ENCODE measurements at regions of chr9 and their contacts with region 1.

Region 1: GRCh38 chr9:69237702-69238295 is 63.7 kb downstream of the TJP2 start:
- DNase-seq: no peak
- H3K27ac ChIP-seq: no peak overlapping the region
- CTCF ChIP-seq: no peak

Region 2: GRCh38 chr9:69223605-69224004 is 14.2 kb before region 1 on chr9:
- CTCF ChIA-PET with region 1: interaction called, 16 read pairs
- POLR2A ChIA-PET with region 1: no interaction called
- DNase-seq: peak; percentile 69
- H3K27ac ChIP-seq: peak overlapping the region; percentile 13; the same call in 1 of the 2 replicates
- CTCF ChIP-seq: peak; percentile 60

Region 3: DNA sequence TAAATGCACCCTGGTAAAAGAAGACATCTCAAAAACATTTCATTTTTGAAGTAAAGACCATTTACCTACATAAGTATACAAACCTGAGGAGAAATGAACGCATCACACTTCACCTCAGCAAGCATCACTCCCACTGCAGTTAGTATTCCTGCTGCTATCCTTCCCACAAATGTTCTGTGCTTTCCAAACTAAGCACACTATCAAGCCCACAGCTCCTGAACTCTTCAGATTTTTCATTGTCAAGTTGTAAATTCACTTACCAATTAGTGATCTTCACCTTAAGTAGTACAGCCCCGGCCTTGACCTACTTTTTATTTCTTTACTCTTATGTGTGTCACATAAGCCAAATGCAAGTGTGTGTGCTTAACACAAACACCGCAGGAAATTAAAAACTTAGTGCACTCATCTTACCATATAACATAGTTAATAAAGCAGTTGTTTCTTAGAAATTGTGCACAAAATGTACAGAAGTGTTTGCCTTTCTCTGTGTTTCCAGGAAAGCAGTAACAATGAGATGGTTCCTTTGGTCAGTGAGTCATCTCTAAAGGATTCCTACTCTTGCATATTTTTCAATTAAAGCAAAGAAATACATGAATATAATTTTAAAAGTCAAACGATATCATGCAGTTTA is 265.0 kb after region 1 on chr9:
- CTCF ChIA-PET with region 1: no interaction called
- POLR2A ChIA-PET with region 1: no interaction called
- DNase-seq: peak; percentile 52
- H3K27ac ChIP-seq: no peak overlapping the region
- CTCF ChIP-seq: no peak

Measured in RWPE1 (cell line).